Esophagus muscularis mucosa (tissue), 4 donors: ENCODE measurements at regions of chr5 and their contacts with region 1.

Region 1: GRCh38 chr5:2044041-2044440 is 161.3 kb upstream of the IRX4 start:
- DNase-seq: peak; percentile 62
- H3K4me3 ChIP-seq: no peak overlapping the region
- H3K27ac ChIP-seq: no peak overlapping the region
- H3K4me1 ChIP-seq: peaks cover 0 to 2% (median 1%) of the 10 kb centered on the region in 4 donors
- H3K27me3 ChIP-seq: peaks cover 0 to 26% (median 0%) of the 10 kb centered on the region in 4 donors
- CTCF ChIP-seq: no peak
- EP300 ChIP-seq: no peak
- POLR2A ChIP-seq: no peak

Region 2: DNA sequence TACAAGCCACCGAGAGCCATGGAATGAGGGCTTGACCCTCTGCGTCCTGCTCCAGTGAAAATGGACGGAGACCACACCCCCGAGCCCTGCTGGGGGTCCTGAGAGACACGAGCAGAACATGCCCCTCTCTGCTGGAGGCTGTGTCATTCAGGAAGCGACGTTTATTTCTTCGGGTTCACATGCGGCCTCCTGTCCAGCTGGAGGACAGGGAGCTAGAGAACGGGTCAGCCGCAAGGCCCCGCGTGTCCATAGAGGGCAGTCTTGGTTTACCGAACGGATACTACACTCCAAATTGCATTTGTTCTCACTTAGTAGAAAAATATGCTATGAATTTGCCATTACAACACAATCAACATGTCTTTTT is 280.5 kb before region 1 on chr5:
- intact Hi-C with region 1: loop called (anchors 5 kb)
- DNase-seq: no peak
- H3K4me3 ChIP-seq: no peak overlapping the region
- H3K27ac ChIP-seq: no peak overlapping the region
- H3K4me1 ChIP-seq: no peaks in the 10 kb centered on the region
- H3K27me3 ChIP-seq: peaks cover 0 to 62% (median 0%) of the 10 kb centered on the region in 4 donors
- CTCF ChIP-seq: peak; percentile 37 to 56 (median 45)
- EP300 ChIP-seq: no peak
- POLR2A ChIP-seq: no peak